WTC11 (cell line): ENCODE measurements at regions of chr2 and their contacts with region 1.

Region 1: GRCh38 chr2:159557451-159558034 is 58.8 kb downstream of the BAZ2B start:
- DNase-seq: no peak
- ATAC-seq: peak; percentile 93
- H3K4me3 Mint-ChIP-seq: no peak overlapping the region
- H3K27ac Mint-ChIP-seq: peak overlapping the region; percentile 78
- H3K4me1 Mint-ChIP-seq: peaks cover 16% of the 10 kb centered on the region
- H3K27me3 Mint-ChIP-seq: no peaks in the 10 kb centered on the region
- CTCF ChIP-seq: no peak

Region 2: GRCh38 chr2:159712143-159712928 is 154.8 kb after region 1 on chr2 and contains the start of gene MARCHF7:
- CTCF ChIA-PET with region 1: interaction called, 16 read pairs
- POLR2A ChIA-PET with region 1: interaction called, 7 read pairs
- DNase-seq: peak; percentile 96
- ATAC-seq: peak; percentile 93
- H3K4me3 Mint-ChIP-seq: peak within 1 kb of the TSS; percentile 99
- H3K27ac Mint-ChIP-seq: peak within 1 kb of the TSS; percentile 100
- H3K4me1 Mint-ChIP-seq: peaks cover 46% of the 10 kb centered on the region
- H3K27me3 Mint-ChIP-seq: no peaks in the 10 kb centered on the region
- CTCF ChIP-seq: no peak
- total RNA-seq, gene MARCHF7: 84.0 to 109 TPM (median 97.6 TPM) in 3 replicates

Region 3: GRCh38 chr2:159728629-159729028 is 171.1 kb after region 1 on chr2:
- CTCF ChIA-PET with region 1: no interaction called
- POLR2A ChIA-PET with region 1: interaction called, 11 read pairs
- DNase-seq: no peak
- ATAC-seq: no peak
- H3K4me3 Mint-ChIP-seq: no peak overlapping the region
- H3K27ac Mint-ChIP-seq: no peak overlapping the region; the same call in 1 of the 2 replicates
- H3K4me1 Mint-ChIP-seq: peaks cover 10% of the 10 kb centered on the region
- H3K27me3 Mint-ChIP-seq: no peaks in the 10 kb centered on the region
- CTCF ChIP-seq: no peak

Region 4: DNA sequence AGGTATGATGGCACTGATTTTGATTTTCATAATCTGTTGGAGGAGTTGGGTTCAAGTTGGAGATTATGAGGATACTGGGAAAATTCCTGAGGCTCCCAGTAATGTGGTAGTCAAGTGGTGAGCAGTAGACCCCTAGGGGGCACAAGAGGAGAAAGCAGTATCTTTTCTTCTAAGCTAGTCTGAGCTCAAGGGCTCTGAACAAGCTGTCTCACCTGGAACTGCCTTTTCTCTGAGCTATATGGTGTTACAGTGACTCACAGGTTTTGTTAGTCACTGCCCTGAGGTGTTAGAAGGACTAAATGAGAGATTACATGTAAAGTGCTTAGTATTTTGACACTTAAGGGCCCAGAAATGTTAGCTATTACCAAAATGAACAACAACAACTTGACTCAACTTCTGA is 198.2 kb after region 1 on chr2:
- CTCF ChIA-PET with region 1: interaction called, 11 read pairs
- POLR2A ChIA-PET with region 1: no interaction called
- DNase-seq: no peak
- ATAC-seq: peak; percentile 96
- H3K4me3 Mint-ChIP-seq: no peak overlapping the region
- H3K27ac Mint-ChIP-seq: no peak overlapping the region
- H3K4me1 Mint-ChIP-seq: no peaks in the 10 kb centered on the region
- H3K27me3 Mint-ChIP-seq: no peaks in the 10 kb centered on the region
- CTCF ChIP-seq: peak; percentile 25